Naive thymus-derived CD4-positive, alpha-beta T cell (primary cell): ENCODE measurements at regions of chr1 and their contacts with region 1.

Region 1: DNA sequence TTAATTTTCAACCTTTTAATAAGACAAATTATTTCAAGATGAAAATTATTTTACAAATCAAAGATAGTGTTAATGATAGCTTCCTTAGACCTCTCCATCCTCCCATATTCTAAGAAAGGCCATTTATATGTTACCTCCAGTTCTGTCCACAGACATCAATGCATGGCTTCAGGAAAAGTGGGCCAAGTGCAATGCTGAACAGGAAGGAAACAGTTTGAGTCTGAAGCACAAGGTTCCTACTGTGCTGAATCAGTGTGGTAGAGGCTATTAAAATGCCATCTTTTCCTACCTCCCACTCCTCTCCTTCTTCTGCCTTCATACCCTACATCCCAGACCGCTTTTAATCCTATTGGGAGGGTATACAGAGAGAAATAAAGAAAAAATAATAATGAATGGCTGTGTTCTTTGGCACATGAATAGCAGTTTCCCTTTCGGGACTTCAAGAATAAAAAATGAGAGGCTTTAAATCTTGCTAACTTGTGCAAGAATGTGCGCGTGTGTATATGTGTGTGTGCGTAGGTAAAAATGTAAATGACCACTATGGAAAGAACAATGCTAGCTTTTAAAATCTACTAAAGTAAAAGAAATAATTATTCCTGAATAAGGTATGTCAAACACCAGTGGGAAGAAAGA is 62.6 kb upstream of the C1orf105 start:
- DNase-seq: no peak
- ATAC-seq: peak; percentile 24
- H3K4me3 ChIP-seq: no peak overlapping the region
- H3K4me3 Mint-ChIP-seq: peak overlapping the region; percentile 60 to 76 (median 72)
- H3K27ac ChIP-seq: peak overlapping the region; percentile 58
- H3K27ac Mint-ChIP-seq: peak overlapping the region; percentile 67 to 93 (median 90)
- H3K4me1 ChIP-seq: peaks cover 25 to 40% of the 10 kb centered on the region in 2 donors
- H3K4me1 Mint-ChIP-seq: peaks cover 8 to 56% (median 34%) of the 10 kb centered on the region in 7 donors
- H3K27me3 ChIP-seq: no peaks in the 10 kb centered on the region
- H3K27me3 Mint-ChIP-seq: no peaks in the 10 kb centered on the region

Region 2: DNA sequence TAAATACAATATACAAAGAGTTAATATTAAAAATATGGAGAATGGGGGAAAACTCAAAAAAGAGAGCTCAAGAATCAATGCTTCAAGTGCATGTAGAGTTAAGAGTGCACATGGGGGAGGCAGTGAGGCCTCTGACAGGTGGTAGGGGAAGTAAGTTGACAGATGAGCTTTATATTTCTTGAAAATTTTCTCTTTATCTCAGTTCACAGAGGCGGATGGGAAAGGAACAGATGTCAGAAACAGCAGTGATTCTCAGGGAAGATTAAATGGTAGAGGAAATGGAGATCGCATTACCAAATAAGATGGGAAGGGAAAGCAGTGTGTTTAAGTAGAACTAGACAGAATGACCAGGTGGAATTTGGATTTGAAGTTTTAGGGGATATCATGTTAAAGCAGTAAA is 137.5 kb before region 1 on chr1:
- CTCF ChIA-PET with region 1: no interaction called
- POLR2A ChIA-PET with region 1: no interaction called
- intact Hi-C with region 1: no loop called
- DNase-seq: no peak
- ATAC-seq: no peak
- H3K4me3 ChIP-seq: no peak overlapping the region
- H3K4me3 Mint-ChIP-seq: no peak overlapping the region
- H3K27ac ChIP-seq: no peak overlapping the region
- H3K27ac Mint-ChIP-seq: no peak overlapping the region
- H3K4me1 ChIP-seq: no peaks in the 10 kb centered on the region
- H3K4me1 Mint-ChIP-seq: peaks cover 0 to 3% (median 0%) of the 10 kb centered on the region in 7 donors
- H3K27me3 ChIP-seq: no peaks in the 10 kb centered on the region
- H3K27me3 Mint-ChIP-seq: peaks cover 0 to 2% (median 0%) of the 10 kb centered on the region in 5 donors

Region 3: DNA sequence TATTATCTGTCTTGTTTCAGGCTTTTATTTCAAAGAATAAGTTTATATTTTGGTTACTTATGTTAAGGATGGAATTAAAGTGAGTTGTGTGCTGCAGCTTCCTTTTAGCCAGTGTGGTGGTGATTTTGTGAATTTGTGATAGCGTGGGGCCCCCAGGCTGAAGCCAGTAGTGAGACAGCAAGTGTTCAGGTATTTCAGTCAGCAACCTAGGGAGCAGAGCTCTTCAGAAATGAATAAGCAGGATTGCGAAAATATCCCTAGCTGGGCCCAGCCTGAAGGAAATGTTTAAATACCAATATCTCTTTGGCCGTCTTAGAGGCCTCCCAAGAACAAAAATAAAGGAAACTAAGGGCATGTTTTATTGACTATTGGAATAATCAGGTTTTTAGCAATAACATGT is 88.2 kb before region 1 on chr1:
- CTCF ChIA-PET with region 1: no interaction called
- POLR2A ChIA-PET with region 1: no interaction called
- intact Hi-C with region 1: loop called in 1 of 2 experiments (anchors 2 kb)
- DNase-seq: no peak
- ATAC-seq: no peak
- H3K4me3 ChIP-seq: no peak overlapping the region
- H3K4me3 Mint-ChIP-seq: peak overlapping the region in 1 of 10 donors; percentile 18
- H3K27ac ChIP-seq: no peak overlapping the region
- H3K27ac Mint-ChIP-seq: peak overlapping the region in 2 of 9 donors; percentile 31 to 71
- H3K4me1 ChIP-seq: no peaks in the 10 kb centered on the region
- H3K4me1 Mint-ChIP-seq: peaks cover 0 to 43% (median 0%) of the 10 kb centered on the region in 7 donors
- H3K27me3 ChIP-seq: no peaks in the 10 kb centered on the region
- H3K27me3 Mint-ChIP-seq: no peaks in the 10 kb centered on the region

Region 4: GRCh38 chr1:172293429-172293828 is 64.4 kb before region 1 on chr1:
- CTCF ChIA-PET with region 1: no interaction called
- POLR2A ChIA-PET with region 1: no interaction called
- intact Hi-C with region 1: no loop called
- DNase-seq: no peak
- ATAC-seq: no peak
- H3K4me3 ChIP-seq: no peak overlapping the region
- H3K4me3 Mint-ChIP-seq: no peak overlapping the region
- H3K27ac ChIP-seq: no peak overlapping the region
- H3K27ac Mint-ChIP-seq: no peak overlapping the region
- H3K4me1 ChIP-seq: no peaks in the 10 kb centered on the region
- H3K4me1 Mint-ChIP-seq: peaks cover 0 to 3% (median 0%) of the 10 kb centered on the region in 7 donors
- H3K27me3 ChIP-seq: no peaks in the 10 kb centered on the region
- H3K27me3 Mint-ChIP-seq: no peaks in the 10 kb centered on the region

Region 5: GRCh38 chr1:172338295-172338735 is 19.6 kb before region 1 on chr1:
- CTCF ChIA-PET with region 1: no interaction called
- POLR2A ChIA-PET with region 1: interaction called, 4 read pairs
- intact Hi-C with region 1: loop called in 1 of 2 experiments (anchors 1 kb)
- DNase-seq: peak in 1 of 9 donors; percentile 48
- ATAC-seq: no peak
- H3K4me3 ChIP-seq: no peak overlapping the region
- H3K4me3 Mint-ChIP-seq: peak overlapping the region in 1 of 10 donors; percentile 10
- H3K27ac ChIP-seq: no peak overlapping the region
- H3K27ac Mint-ChIP-seq: peak overlapping the region in 1 of 9 donors; percentile 42
- H3K4me1 ChIP-seq: peaks cover 0 to 4% of the 10 kb centered on the region in 2 donors
- H3K4me1 Mint-ChIP-seq: peaks cover 2 to 45% (median 7%) of the 10 kb centered on the region in 7 donors
- H3K27me3 ChIP-seq: no peaks in the 10 kb centered on the region
- H3K27me3 Mint-ChIP-seq: no peaks in the 10 kb centered on the region

Region 6: DNA sequence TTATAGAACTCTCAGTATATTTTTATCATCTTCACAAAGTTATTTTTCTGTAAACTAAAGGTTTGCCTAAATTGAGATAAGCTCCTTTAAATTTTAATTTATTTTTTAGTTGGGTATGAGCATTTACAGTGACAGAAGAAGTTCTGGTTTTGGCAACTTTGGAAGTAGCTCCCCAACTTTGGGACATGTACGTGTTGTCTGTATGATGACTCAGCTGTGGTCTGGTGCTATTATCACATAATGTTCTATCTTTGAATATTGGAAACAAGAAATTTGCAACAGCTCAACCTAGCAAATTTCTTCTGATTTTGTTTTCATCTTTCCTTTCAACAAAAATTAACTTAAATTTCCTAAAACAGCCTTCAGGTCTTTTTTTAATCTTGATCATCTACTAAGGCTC is 16.0 kb after region 1 on chr1:
- CTCF ChIA-PET with region 1: interaction called, 4 read pairs
- POLR2A ChIA-PET with region 1: interaction called, 8 read pairs
- intact Hi-C with region 1: loop called in 1 of 2 experiments (anchors 1 kb)
- DNase-seq: no peak
- ATAC-seq: no peak
- H3K4me3 ChIP-seq: no peak overlapping the region
- H3K4me3 Mint-ChIP-seq: no peak overlapping the region
- H3K27ac ChIP-seq: no peak overlapping the region
- H3K27ac Mint-ChIP-seq: no peak overlapping the region
- H3K4me1 ChIP-seq: no peaks in the 10 kb centered on the region
- H3K4me1 Mint-ChIP-seq: peaks cover 0 to 25% (median 11%) of the 10 kb centered on the region in 7 donors
- H3K27me3 ChIP-seq: no peaks in the 10 kb centered on the region
- H3K27me3 Mint-ChIP-seq: no peaks in the 10 kb centered on the region